ENCODE measurements at regions of chr2 and their contacts with region 1.

Region 1: DNA sequence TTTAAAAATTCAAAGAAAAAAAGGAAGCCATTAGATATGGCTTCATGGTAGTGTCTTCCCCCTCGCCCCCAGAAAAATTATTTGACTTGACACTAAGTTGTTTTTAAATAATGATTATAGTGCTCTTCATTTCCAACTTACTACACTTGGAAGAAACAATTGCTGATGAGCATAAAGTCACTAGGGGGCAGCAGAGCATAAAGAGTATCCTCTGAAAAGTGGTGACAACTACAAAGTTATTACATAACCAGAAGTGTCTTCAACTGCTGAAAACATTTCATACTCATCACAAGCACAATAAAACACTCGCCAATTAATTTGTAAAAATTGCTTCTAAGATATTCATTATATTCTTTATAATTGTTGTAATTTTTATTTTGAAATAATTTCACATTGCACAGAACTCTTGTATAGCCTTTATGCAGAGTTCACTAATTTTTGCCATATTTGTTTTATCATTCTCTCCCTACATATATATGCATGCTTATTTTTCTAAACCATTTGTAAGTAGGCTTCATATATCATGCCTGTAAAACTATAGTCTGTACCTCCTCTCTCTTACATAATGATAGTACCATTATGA is 54.9 kb downstream of the EXOC6B start:
- DNase-seq: peak in 3 of 10 donors; percentile 26 to 79 (median 73)
- H3K4me3 ChIP-seq: no peak overlapping the region
- H3K27ac ChIP-seq: peak overlapping the region in 47 of 59 donors; percentile 8 to 85 (median 59)
- H3K27me3 ChIP-seq: no peaks in the 10 kb centered on the region
- CTCF ChIP-seq: peak; percentile 87 to 100 (median 97)

Region 2: DNA sequence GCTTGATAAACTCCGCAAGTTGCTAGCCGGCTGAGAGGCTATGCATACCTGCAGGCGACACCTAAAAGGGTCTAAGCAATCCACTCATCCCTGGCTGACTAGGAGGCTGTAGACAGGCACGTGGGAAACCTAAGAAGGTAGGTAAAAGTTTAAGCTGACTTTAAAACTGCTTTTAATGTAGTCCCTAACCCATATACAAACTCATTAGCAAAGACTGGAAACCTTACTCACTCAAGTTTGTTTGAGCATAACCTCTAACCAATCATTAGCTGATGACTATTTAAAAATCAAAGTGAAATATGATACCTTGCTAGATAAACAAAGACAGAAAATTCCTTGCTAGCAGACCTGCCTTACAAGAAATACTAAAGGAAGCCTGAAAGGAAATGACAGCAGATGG is 51.6 kb before region 1 on chr2:
- intact Hi-C with region 1: loop called in 1 of 2 experiments (anchors 2 kb)
- DNase-seq: no peak
- H3K4me3 ChIP-seq: no peak overlapping the region
- H3K27ac ChIP-seq: no peak overlapping the region
- H3K27me3 ChIP-seq: no peaks in the 10 kb centered on the region
- CTCF ChIP-seq: no peak

Region 3: GRCh38 chr2:72825241-72826155 is 54.5 kb after region 1 on chr2 and contains the start of gene EXOC6B:
- intact Hi-C with region 1: loop called in 1 of 2 experiments (anchors 5 kb)
- DNase-seq: peak; percentile 90 to 97 (median 96)
- H3K4me3 ChIP-seq: peak within 1 kb of the TSS; percentile 67 to 99 (median 93)
- H3K27ac ChIP-seq: peak within 1 kb of the TSS in 58 of 59 donors; percentile 35 to 93 (median 83)
- H3K27me3 ChIP-seq: no peaks in the 10 kb centered on the region
- CTCF ChIP-seq: peak in 51 of 56 donors; percentile 11 to 73 (median 48)
- total RNA-seq, gene EXOC6B: 102 to 181 (median 132) TPM

Region 4: GRCh38 chr2:72862239-72862988 is 91.4 kb after region 1 on chr2:
- intact Hi-C with region 1: loop called (anchors 1 to 5 kb)
- DNase-seq: peak; percentile 80 to 94 (median 84)
- H3K4me3 ChIP-seq: peak overlapping the region; percentile 21 to 69 (median 50)
- H3K27ac ChIP-seq: peak overlapping the region in 1 of 59 donors; percentile 38
- H3K27me3 ChIP-seq: no peaks in the 10 kb centered on the region
- CTCF ChIP-seq: peak; percentile 65 to 99 (median 97)

Measured in dorsolateral prefrontal cortex (tissue), 120 donors.